Activated CD4-positive, alpha-beta memory T cell treated with anti-CD3 and anti-CD28 coated beads, Interleukin-2, amount 10 ng/mL, durations not matched to agents 7 days and 5 days (primary cell): ENCODE measurements at regions of chr4 and their contacts with region 1.

Region 1: GRCh38 chr4:153471691-153472080 is 5.5 kb downstream of the TMEM131L start:
- DNase-seq: no peak
- H3K4me3 Mint-ChIP-seq: peak overlapping the region; percentile 35
- H3K27ac Mint-ChIP-seq: peak overlapping the region; percentile 81
- H3K4me1 Mint-ChIP-seq: peaks cover 62% of the 10 kb centered on the region
- H3K27me3 Mint-ChIP-seq: no peaks in the 10 kb centered on the region

Region 2: GRCh38 chr4:153528705-153529485 is 57.2 kb after region 1 on chr4:
- CTCF ChIA-PET with region 1: interaction called, 16 read pairs
- POLR2A ChIA-PET with region 1: interaction called, 99 read pairs
- DNase-seq: no peak
- H3K4me3 Mint-ChIP-seq: peak overlapping the region; percentile 54
- H3K27ac Mint-ChIP-seq: peak overlapping the region; percentile 81
- H3K4me1 Mint-ChIP-seq: peaks cover 78% of the 10 kb centered on the region
- H3K27me3 Mint-ChIP-seq: no peaks in the 10 kb centered on the region